RWPE1 (cell line): ENCODE measurements at regions of chr11 and their contacts with region 1.

Region 1: GRCh38 chr11:125141686-125142535 is 22.6 kb upstream of the PKNOX2 start:
- DNase-seq: peak; percentile 55
- H3K27ac ChIP-seq: no peak overlapping the region
- CTCF ChIP-seq: peak; percentile 92

Region 2: GRCh38 chr11:125157953-125158680 is 16.2 kb after region 1 on chr11:
- CTCF ChIA-PET with region 1: interaction called, 10 read pairs
- POLR2A ChIA-PET with region 1: no interaction called
- DNase-seq: no peak
- H3K27ac ChIP-seq: no peak overlapping the region
- CTCF ChIP-seq: no peak

Region 3: GRCh38 chr11:125192183-125192582 is 50.3 kb after region 1 on chr11:
- CTCF ChIA-PET with region 1: no interaction called
- POLR2A ChIA-PET with region 1: no interaction called
- DNase-seq: no peak
- H3K27ac ChIP-seq: no peak overlapping the region
- CTCF ChIP-seq: no peak